Panc1 (cell line): ENCODE measurements at regions of chr11 and their contacts with region 1.

Region 1: GRCh38 chr11:129331871-129332274 is 43.8 kb upstream of the BARX2 start:
- DNase-seq: peak; percentile 64
- ATAC-seq: peak; percentile 99
- H3K4me3 ChIP-seq: no peak overlapping the region
- H3K27ac ChIP-seq: peak overlapping the region; percentile 52; the same call in 1 of the 2 replicates
- H3K4me1 ChIP-seq: peaks cover 6% of the 10 kb centered on the region; the same call in 1 of the 2 replicates
- H3K27me3 ChIP-seq: no peaks in the 10 kb centered on the region
- CTCF ChIP-seq: peak; percentile 97

Region 2: GRCh38 chr11:128582496-128583366 is 749.1 kb before region 1 on chr11:
- CTCF ChIA-PET with region 1: no interaction called
- POLR2A ChIA-PET with region 1: no interaction called
- in situ Hi-C with region 1: no loop called
- intact Hi-C with region 1: no loop called
- DNase-seq: peak; percentile 51
- ATAC-seq: no peak
- H3K4me3 ChIP-seq: no peak overlapping the region
- H3K27ac ChIP-seq: no peak overlapping the region
- H3K4me1 ChIP-seq: no peaks in the 10 kb centered on the region
- H3K27me3 ChIP-seq: peaks cover 35% of the 10 kb centered on the region
- CTCF ChIP-seq: no peak

Region 3: GRCh38 chr11:128884703-128885338 is 447.1 kb before region 1 on chr11:
- CTCF ChIA-PET with region 1: interaction called, 5 read pairs
- POLR2A ChIA-PET with region 1: no interaction called
- in situ Hi-C with region 1: no loop called
- intact Hi-C with region 1: loop called (anchors 5 kb)
- DNase-seq: peak; percentile 69
- ATAC-seq: peak; percentile 90
- H3K4me3 ChIP-seq: no peak overlapping the region
- H3K27ac ChIP-seq: no peak overlapping the region
- H3K4me1 ChIP-seq: no peaks in the 10 kb centered on the region
- H3K27me3 ChIP-seq: peaks cover 25% of the 10 kb centered on the region
- CTCF ChIP-seq: peak; percentile 93

Region 4: GRCh38 chr11:129225190-129225589 is 106.7 kb before region 1 on chr11:
- CTCF ChIA-PET with region 1: interaction called, 6 read pairs
- POLR2A ChIA-PET with region 1: no interaction called
- in situ Hi-C with region 1: no loop called
- intact Hi-C with region 1: loop called (anchors 5 kb)
- DNase-seq: no peak
- ATAC-seq: 0 out of 2 replicates have a peak, but pooled peaks have one; percentile 21
- H3K4me3 ChIP-seq: no peak overlapping the region
- H3K27ac ChIP-seq: no peak overlapping the region
- H3K4me1 ChIP-seq: no peaks in the 10 kb centered on the region
- H3K27me3 ChIP-seq: no peaks in the 10 kb centered on the region
- CTCF ChIP-seq: no peak

Region 5: DNA sequence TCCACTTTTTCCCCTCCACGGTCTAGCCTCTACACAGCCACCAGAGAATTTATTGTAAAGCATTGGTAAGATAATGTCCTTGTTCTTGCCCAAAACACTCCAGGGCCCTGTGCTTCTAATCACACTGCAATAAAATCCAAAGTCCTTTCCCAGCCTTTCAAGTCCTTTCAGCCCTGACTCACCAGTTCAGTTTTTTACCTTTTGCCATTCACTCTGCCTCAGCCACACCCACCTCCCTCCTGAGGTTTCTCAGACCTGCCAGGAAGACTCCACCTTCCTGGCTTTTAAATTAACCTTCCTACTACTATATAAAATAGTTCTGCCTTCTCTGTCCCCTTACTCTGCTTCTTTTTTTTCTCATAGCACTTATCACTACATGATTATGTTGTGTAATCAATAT is 48.7 kb before region 1 on chr11:
- CTCF ChIA-PET with region 1: no interaction called
- POLR2A ChIA-PET with region 1: no interaction called
- in situ Hi-C with region 1: no loop called
- intact Hi-C with region 1: no loop called
- DNase-seq: no peak
- ATAC-seq: no peak
- H3K4me3 ChIP-seq: no peak overlapping the region
- H3K27ac ChIP-seq: no peak overlapping the region
- H3K4me1 ChIP-seq: peaks cover 21% of the 10 kb centered on the region
- H3K27me3 ChIP-seq: no peaks in the 10 kb centered on the region
- CTCF ChIP-seq: no peak

Region 6: GRCh38 chr11:129386795-129387397 is 55.0 kb after region 1 on chr11:
- CTCF ChIA-PET with region 1: no interaction called
- POLR2A ChIA-PET with region 1: no interaction called
- in situ Hi-C with region 1: no loop called
- intact Hi-C with region 1: no loop called
- DNase-seq: no peak
- ATAC-seq: peak; percentile 60
- H3K4me3 ChIP-seq: peak overlapping the region; percentile 13 to 41; a peak in 3 of 4 replicates
- H3K27ac ChIP-seq: peak overlapping the region; percentile 29; the same call in 1 of the 2 replicates
- H3K4me1 ChIP-seq: peaks cover 14% of the 10 kb centered on the region
- H3K27me3 ChIP-seq: peaks cover 6% of the 10 kb centered on the region; the same call in 1 of the 2 replicates
- CTCF ChIP-seq: no peak